CD4-positive, alpha-beta memory T cell (primary cell): ENCODE measurements at regions of chrX and their contacts with region 1.

Region 1: GRCh38 chrX:54044126-54044876 is at the start of gene PHF8:
- DNase-seq: peak; percentile 91 to 96 (median 96)
- H3K4me3 ChIP-seq: peak within 1 kb of the TSS; percentile 34 to 69
- H3K4me3 Mint-ChIP-seq: peak within 1 kb of the TSS; percentile 91 to 97 (median 94)
- H3K27ac ChIP-seq: peak within 1 kb of the TSS; percentile 90
- H3K27ac Mint-ChIP-seq: peak within 1 kb of the TSS; percentile 96 to 99 (median 97)
- H3K4me1 ChIP-seq: peaks cover 9% of the 10 kb centered on the region
- H3K4me1 Mint-ChIP-seq: peaks cover 10 to 41% (median 15%) of the 10 kb centered on the region in 4 donors
- H3K27me3 ChIP-seq: no peaks in the 10 kb centered on the region
- H3K27me3 Mint-ChIP-seq: no peaks in the 10 kb centered on the region
- total RNA-seq, gene PHF8: 65.1 to 67.2 TPM

Region 2: DNA sequence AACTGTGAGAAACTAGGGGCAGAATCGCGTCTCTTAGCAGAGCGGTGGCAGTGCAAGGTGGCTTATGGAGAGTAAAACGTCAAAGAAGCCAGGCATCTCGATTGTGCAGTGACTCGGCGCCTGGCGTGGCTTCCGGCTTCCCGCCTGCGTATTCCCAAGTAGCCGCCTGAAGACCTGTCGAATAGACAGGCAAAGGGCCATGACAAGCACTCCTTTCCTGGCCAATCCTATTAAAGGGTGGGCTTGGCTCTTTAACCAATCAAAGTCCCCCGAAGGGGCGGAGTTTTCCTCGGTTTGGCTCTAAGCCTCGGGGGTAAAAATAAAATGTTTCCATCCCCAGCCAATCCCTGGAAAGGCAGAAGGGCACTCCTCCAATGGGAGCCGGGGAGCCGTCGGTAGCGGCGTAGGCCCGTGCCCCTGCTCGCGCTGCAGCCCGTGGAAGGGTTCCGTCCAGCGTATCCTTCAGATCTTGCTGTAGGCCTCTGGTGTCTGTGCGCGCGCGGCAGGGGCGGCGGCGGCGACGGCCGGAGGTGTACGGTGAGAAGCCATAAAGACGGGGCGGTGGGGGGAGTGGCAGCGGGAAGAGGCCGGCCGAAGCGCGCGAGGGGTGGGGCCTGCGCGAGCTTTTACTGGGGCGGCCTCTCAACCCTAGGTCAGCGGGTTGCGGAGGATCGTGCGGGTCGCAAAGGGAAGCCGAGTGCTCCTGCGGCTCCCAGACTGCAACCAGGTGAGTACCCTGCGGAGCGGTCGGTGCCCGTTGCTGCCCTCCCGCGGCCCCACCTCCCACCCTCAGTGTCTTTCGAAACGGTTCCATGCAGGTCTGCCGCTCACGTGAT is 950.3 kb before region 1 on chrX and contains the start of gene KANTR:
- CTCF ChIA-PET with region 1: no interaction called
- POLR2A ChIA-PET with region 1: no interaction called
- intact Hi-C with region 1: loop called (anchors 5 kb)
- DNase-seq: peak; percentile 83 to 92 (median 84)
- H3K4me3 ChIP-seq: peak within 1 kb of the TSS; percentile 29 to 58
- H3K4me3 Mint-ChIP-seq: peak within 1 kb of the TSS; percentile 84 to 93 (median 89)
- H3K27ac ChIP-seq: peak within 1 kb of the TSS; percentile 55
- H3K27ac Mint-ChIP-seq: peak within 1 kb of the TSS; percentile 87 to 92 (median 91)
- H3K4me1 ChIP-seq: peaks cover 9% of the 10 kb centered on the region
- H3K4me1 Mint-ChIP-seq: peaks cover 7 to 35% (median 19%) of the 10 kb centered on the region in 4 donors
- H3K27me3 ChIP-seq: no peaks in the 10 kb centered on the region
- H3K27me3 Mint-ChIP-seq: no peaks in the 10 kb centered on the region
- total RNA-seq, gene KANTR: 19.9 to 23.4 TPM

Region 3: GRCh38 chrX:53683556-53684414 is 360.5 kb before region 1 on chrX:
- CTCF ChIA-PET with region 1: no interaction called
- POLR2A ChIA-PET with region 1: interaction called, 26 read pairs
- intact Hi-C with region 1: loop called (anchors 1 kb)
- DNase-seq: peak; percentile 88 to 97 (median 95)
- H3K4me3 ChIP-seq: peak overlapping the region; percentile 65 to 66
- H3K4me3 Mint-ChIP-seq: peak overlapping the region; percentile 88 to 97 (median 90)
- H3K27ac ChIP-seq: peak overlapping the region; percentile 94
- H3K27ac Mint-ChIP-seq: peak overlapping the region; percentile 87 to 99 (median 97)
- H3K4me1 ChIP-seq: peaks cover 41% of the 10 kb centered on the region
- H3K4me1 Mint-ChIP-seq: peaks cover 16 to 52% (median 33%) of the 10 kb centered on the region in 4 donors
- H3K27me3 ChIP-seq: no peaks in the 10 kb centered on the region
- H3K27me3 Mint-ChIP-seq: no peaks in the 10 kb centered on the region

Region 4: DNA sequence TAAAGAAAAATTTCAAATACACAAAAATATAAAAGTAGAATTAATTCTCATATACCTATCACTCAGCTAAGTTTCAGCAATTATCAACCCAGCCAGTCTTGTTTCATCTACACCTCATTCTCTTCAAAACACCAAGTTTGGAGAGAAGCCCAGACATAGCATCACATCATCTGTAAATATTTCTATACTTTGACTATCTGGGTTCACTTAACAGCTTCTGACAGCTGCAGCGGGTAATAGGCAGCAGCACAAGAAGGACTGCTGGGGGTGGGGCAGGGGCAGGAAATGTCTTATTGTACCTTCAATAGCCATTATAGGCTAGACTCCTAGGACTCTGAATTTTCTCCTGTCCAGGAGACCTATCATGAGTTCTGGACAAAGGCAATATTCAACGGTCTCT is 54.1 kb before region 1 on chrX:
- CTCF ChIA-PET with region 1: no interaction called
- POLR2A ChIA-PET with region 1: no interaction called
- intact Hi-C with region 1: no loop called
- DNase-seq: no peak
- H3K4me3 ChIP-seq: no peak overlapping the region
- H3K4me3 Mint-ChIP-seq: no peak overlapping the region
- H3K27ac ChIP-seq: no peak overlapping the region
- H3K27ac Mint-ChIP-seq: no peak overlapping the region
- H3K4me1 ChIP-seq: no peaks in the 10 kb centered on the region
- H3K4me1 Mint-ChIP-seq: no peaks in the 10 kb centered on the region
- H3K27me3 ChIP-seq: no peaks in the 10 kb centered on the region
- H3K27me3 Mint-ChIP-seq: no peaks in the 10 kb centered on the region

Region 5: DNA sequence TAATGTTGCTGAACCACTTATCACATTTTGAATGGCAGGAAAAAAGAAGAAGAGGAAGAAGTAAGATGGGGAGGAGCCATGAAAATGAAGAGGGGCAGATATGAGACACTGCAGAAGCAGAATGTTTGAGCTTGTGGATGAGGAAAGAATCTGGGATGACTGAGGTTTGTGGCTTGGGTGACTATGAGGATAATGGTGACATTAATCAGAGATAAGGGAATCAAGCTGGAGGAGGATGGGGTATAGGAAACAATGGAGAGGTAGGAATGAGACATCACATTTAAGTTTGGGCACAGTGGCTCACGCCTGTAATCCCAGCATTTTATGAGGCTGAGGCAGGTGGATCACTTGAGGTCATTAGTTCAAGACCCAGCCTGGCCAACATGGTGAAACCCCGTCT is 19.1 kb after region 1 on chrX:
- CTCF ChIA-PET with region 1: no interaction called
- POLR2A ChIA-PET with region 1: no interaction called
- intact Hi-C with region 1: no loop called
- DNase-seq: no peak
- H3K4me3 ChIP-seq: no peak overlapping the region
- H3K4me3 Mint-ChIP-seq: no peak overlapping the region
- H3K27ac ChIP-seq: no peak overlapping the region
- H3K27ac Mint-ChIP-seq: no peak overlapping the region
- H3K4me1 ChIP-seq: no peaks in the 10 kb centered on the region
- H3K4me1 Mint-ChIP-seq: no peaks in the 10 kb centered on the region
- H3K27me3 ChIP-seq: no peaks in the 10 kb centered on the region
- H3K27me3 Mint-ChIP-seq: no peaks in the 10 kb centered on the region

Region 6: DNA sequence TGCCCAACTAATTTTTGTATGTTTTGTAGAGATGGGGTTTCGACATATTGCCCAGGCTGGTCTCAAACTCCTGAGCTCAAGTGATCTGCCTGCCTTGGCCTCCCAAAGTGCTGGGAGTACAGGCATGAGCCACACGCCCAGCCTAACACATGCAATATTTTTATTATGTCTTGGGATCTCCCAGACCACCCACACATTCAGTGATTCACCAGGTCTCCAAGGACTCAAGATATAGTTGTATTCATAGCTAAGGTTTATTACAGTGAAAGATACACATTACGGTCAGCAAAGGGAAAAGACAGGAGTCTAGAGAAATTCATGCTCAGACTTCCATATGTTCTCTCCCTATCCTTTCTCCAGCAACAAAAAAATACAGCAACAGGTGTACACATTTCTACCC is 164.2 kb after region 1 on chrX:
- CTCF ChIA-PET with region 1: no interaction called
- POLR2A ChIA-PET with region 1: no interaction called
- intact Hi-C with region 1: no loop called
- DNase-seq: no peak
- H3K4me3 ChIP-seq: no peak overlapping the region
- H3K4me3 Mint-ChIP-seq: no peak overlapping the region
- H3K27ac ChIP-seq: no peak overlapping the region
- H3K27ac Mint-ChIP-seq: no peak overlapping the region
- H3K4me1 ChIP-seq: no peaks in the 10 kb centered on the region
- H3K4me1 Mint-ChIP-seq: no peaks in the 10 kb centered on the region
- H3K27me3 ChIP-seq: no peaks in the 10 kb centered on the region
- H3K27me3 Mint-ChIP-seq: peaks cover 4 to 5% of the 10 kb centered on the region in 2 donors

Region 7: DNA sequence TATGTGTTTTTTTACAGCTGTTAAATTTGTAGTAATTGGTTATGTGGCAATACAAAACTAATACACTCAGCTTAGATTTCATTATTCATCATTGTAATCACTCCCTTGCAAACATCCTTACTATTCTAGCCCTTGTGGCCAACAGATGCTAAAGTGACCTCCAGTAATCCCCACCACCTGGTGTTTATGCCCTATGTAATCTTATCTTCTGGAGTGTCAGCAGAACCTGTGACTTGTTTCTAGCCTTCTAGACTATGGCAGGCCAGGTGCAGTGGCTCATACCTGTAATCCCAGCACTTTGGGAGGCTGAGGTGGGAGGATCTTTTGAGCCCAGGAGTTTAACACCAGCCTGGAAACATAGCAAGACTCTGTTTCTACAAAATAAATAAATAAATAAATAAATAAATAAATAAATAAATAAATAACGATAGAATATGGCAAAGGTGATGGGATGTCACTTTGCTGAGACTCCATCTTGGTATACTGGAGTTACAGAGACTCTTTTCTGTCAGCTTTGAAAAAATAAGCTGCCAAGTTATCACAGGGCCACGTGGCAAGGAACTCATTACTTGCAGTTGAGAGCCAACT is 383.6 kb after region 1 on chrX:
- CTCF ChIA-PET with region 1: no interaction called
- POLR2A ChIA-PET with region 1: no interaction called
- intact Hi-C with region 1: no loop called
- DNase-seq: no peak
- H3K4me3 ChIP-seq: no peak overlapping the region
- H3K4me3 Mint-ChIP-seq: no peak overlapping the region
- H3K27ac ChIP-seq: no peak overlapping the region
- H3K27ac Mint-ChIP-seq: no peak overlapping the region
- H3K4me1 ChIP-seq: no peaks in the 10 kb centered on the region
- H3K4me1 Mint-ChIP-seq: no peaks in the 10 kb centered on the region
- H3K27me3 ChIP-seq: no peaks in the 10 kb centered on the region
- H3K27me3 Mint-ChIP-seq: peaks cover 2 to 5% of the 10 kb centered on the region in 2 donors

Region 8: GRCh38 chrX:54439967-54440871 is 395.9 kb after region 1 on chrX and contains the start of gene TSR2:
- CTCF ChIA-PET with region 1: no interaction called
- POLR2A ChIA-PET with region 1: interaction called, 8 read pairs
- intact Hi-C with region 1: loop called (anchors 1 kb)
- DNase-seq: peak; percentile 76 to 88 (median 80)
- H3K4me3 ChIP-seq: peak within 1 kb of the TSS; percentile 69 to 81
- H3K4me3 Mint-ChIP-seq: peak within 1 kb of the TSS; percentile 86 to 97 (median 93)
- H3K27ac ChIP-seq: peak within 1 kb of the TSS; percentile 75
- H3K27ac Mint-ChIP-seq: peak within 1 kb of the TSS; percentile 84 to 92 (median 90)
- H3K4me1 ChIP-seq: peaks cover 26% of the 10 kb centered on the region
- H3K4me1 Mint-ChIP-seq: peaks cover 15 to 35% (median 25%) of the 10 kb centered on the region in 4 donors
- H3K27me3 ChIP-seq: no peaks in the 10 kb centered on the region
- H3K27me3 Mint-ChIP-seq: no peaks in the 10 kb centered on the region
- total RNA-seq, gene TSR2: 39.2 to 42.1 TPM

Region 9: DNA sequence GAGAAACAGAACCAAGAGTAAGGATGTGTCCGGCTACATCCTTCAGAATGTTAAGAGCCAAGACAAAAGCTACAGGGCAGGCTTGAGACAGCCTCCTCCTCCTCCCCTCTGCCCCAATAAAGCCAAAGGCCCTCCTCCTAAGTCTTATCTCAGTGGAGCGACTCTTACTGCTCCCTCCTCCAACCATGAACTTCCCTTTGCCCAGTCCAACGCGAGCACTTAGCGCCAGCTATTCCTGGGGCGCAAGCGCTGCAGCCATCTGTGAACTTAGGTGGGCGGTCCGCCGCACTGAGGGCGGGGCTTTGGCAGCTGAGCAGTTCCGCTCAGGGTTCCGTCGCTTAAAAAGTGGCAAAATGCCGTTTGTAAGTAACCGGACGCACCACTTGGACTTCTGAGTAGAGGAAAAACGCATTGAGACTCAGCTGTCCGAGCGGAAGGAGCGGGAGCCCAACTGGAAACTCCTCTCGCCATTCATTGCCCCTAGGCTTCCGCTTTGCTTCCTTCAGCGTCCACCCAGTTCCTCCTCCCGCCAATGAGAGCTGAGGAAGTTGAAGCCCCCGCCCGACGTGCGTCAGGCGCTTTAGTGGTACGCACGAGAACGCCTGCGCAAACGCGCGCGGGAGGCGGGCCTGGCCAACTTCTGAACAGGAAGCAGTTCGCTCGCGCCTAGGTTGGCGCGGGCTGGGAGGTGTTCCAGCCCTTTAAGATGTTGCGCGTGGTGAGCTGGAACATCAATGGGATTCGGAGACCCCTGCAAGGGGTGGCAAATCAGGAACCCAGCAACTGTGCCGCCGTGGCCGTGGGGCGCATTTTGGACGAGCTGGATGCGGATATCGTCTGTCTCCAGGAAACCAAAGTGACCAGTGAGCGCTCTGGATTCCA is 955.7 kb after region 1 on chrX and contains the start of gene APEX2:
- CTCF ChIA-PET with region 1: no interaction called
- POLR2A ChIA-PET with region 1: interaction called, 10 read pairs
- intact Hi-C with region 1: loop called (anchors 5 kb)
- DNase-seq: peak; percentile 83 to 91 (median 86)
- H3K4me3 ChIP-seq: peak within 1 kb of the TSS; percentile 63 to 84
- H3K4me3 Mint-ChIP-seq: peak within 1 kb of the TSS; percentile 94 to 97 (median 96)
- H3K27ac ChIP-seq: peak within 1 kb of the TSS; percentile 91
- H3K27ac Mint-ChIP-seq: peak within 1 kb of the TSS; percentile 92 to 99 (median 97)
- H3K4me1 ChIP-seq: peaks cover 17% of the 10 kb centered on the region
- H3K4me1 Mint-ChIP-seq: peaks cover 8 to 29% (median 15%) of the 10 kb centered on the region in 4 donors
- H3K27me3 ChIP-seq: no peaks in the 10 kb centered on the region
- H3K27me3 Mint-ChIP-seq: no peaks in the 10 kb centered on the region
- total RNA-seq, gene APEX2: 13.4 TPM

Region 10: DNA sequence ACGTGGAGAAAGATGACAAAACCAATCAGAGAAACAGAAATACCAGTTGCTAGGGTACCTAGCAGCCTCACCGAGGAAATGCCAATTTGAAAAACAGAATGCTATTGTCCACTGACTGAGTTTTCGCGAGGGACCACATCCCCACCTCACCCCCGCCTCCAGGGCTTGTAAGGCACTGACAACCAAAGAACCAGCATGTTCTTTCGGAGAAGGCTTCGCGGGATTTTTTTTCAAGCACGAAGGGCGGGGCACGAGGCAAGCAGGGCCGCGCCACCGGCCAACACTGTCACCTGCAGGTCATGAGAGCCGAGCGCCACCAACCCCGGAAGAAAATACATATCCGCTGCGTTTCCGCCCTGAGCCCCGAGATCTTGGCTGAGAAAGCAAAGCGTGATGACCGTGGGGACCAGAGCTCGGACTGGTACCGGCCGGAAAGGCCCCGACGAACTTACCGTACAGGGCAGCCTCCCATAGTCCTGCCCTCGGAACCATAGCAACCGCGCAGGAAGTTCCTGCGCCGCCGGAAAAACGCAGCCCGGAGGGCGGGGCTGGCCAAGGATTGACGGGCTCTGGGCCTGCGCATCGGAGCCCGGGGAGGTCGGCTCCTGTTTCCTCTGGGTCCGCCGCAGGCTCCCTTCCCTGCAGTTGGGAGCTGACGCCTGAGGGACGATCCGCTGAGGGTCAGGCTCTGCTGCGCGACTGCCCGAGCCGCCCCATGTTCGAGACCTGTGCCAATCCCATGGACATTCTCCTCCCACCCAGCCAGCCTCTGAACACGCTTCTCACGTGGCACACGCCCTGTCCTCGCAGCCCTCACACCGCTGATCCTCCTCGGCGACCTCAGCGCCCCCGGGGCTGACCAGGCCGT is 1116.6 kb after region 1 on chrX:
- CTCF ChIA-PET with region 1: no interaction called
- POLR2A ChIA-PET with region 1: interaction called, 4 read pairs
- intact Hi-C with region 1: loop called (anchors 5 kb)
- DNase-seq: peak; percentile 90 to 94 (median 91)
- H3K4me3 ChIP-seq: peak overlapping the region; percentile 39 to 80
- H3K4me3 Mint-ChIP-seq: peak overlapping the region; percentile 85 to 94 (median 92)
- H3K27ac ChIP-seq: peak overlapping the region; percentile 92
- H3K27ac Mint-ChIP-seq: peak overlapping the region; percentile 93 to 100 (median 98)
- H3K4me1 ChIP-seq: peaks cover 17% of the 10 kb centered on the region
- H3K4me1 Mint-ChIP-seq: peaks cover 4 to 23% (median 10%) of the 10 kb centered on the region in 4 donors
- H3K27me3 ChIP-seq: no peaks in the 10 kb centered on the region
- H3K27me3 Mint-ChIP-seq: no peaks in the 10 kb centered on the region